Posterior cingulate gyrus (tissue), 11 donors: ENCODE measurements at regions of chr22 and their contacts with region 1.

Region 1: GRCh38 chr22:41517172-41518047 is 26.9 kb downstream of the POLR3H start:
- DNase-seq: peak; percentile 64 to 97 (median 90)

Region 2: GRCh38 chr22:41403532-41404318 is 113.7 kb before region 1 on chr22:
- intact Hi-C with region 1: loop called (anchors 1 kb)
- DNase-seq: peak; percentile 93 to 100 (median 98)

Region 3: GRCh38 chr22:41468381-41469217 is 48.8 kb before region 1 on chr22 and contains the starts of genes ACO2 and PHF5A:
- intact Hi-C with region 1: loop called (anchors 10 kb)
- DNase-seq: peak; percentile 95 to 100 (median 98)

Region 4: GRCh38 chr22:41479671-41480396 is 37.6 kb before region 1 on chr22:
- intact Hi-C with region 1: loop called (anchors 5 kb)
- DNase-seq: peak in 9 of 10 donors; percentile 39 to 91 (median 60)

Region 5: DNA sequence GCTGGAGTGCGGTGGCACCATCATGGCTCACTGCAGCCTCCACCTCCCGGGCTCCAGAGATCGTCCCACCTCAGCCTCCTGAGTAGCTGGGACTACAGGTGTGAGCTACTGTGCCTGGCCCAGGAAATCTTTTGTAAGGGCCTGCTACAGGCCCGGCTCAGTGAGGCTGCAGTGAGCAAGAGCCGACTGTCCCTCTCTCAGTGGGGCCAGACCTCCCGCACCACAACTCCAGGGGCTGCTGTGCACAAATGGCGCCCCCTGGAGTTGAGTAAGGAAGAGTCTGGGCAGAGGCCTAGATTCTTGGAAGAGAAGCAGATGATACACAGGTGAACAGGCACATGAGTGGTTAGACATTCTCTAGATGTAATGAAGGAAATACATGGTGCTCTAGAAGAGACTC is 1043.4 kb after region 1 on chr22:
- intact Hi-C with region 1: no loop called
- DNase-seq: peak in 3 of 10 donors; percentile 37 to 68 (median 64)